PC-3 (cell line): ENCODE measurements at regions of chr3 and their contacts with region 1.

Region 1: GRCh38 chr3:30693470-30694120 is 87.2 kb downstream of the TGFBR2 start:
- DNase-seq: peak; percentile 82
- ATAC-seq: peak; percentile 49
- H3K4me3 ChIP-seq: no peak overlapping the region
- H3K27ac ChIP-seq: peak overlapping the region; percentile 0; the same call in 1 of the 2 replicates
- H3K4me1 ChIP-seq: peaks cover 35% of the 10 kb centered on the region
- H3K27me3 ChIP-seq: no peaks in the 10 kb centered on the region
- CTCF ChIP-seq: peak; percentile 94

Region 2: GRCh38 chr3:30012941-30013543 is 680.6 kb before region 1 on chr3:
- CTCF ChIA-PET with region 1: no interaction called
- POLR2A ChIA-PET with region 1: no interaction called
- intact Hi-C with region 1: loop called (anchors 10 kb)
- DNase-seq: peak; percentile 92
- ATAC-seq: peak; percentile 89
- H3K4me3 ChIP-seq: no peak overlapping the region
- H3K27ac ChIP-seq: no peak overlapping the region
- H3K4me1 ChIP-seq: peaks cover 8% of the 10 kb centered on the region
- H3K27me3 ChIP-seq: no peaks in the 10 kb centered on the region
- CTCF ChIP-seq: peak; percentile 94

Region 3: DNA sequence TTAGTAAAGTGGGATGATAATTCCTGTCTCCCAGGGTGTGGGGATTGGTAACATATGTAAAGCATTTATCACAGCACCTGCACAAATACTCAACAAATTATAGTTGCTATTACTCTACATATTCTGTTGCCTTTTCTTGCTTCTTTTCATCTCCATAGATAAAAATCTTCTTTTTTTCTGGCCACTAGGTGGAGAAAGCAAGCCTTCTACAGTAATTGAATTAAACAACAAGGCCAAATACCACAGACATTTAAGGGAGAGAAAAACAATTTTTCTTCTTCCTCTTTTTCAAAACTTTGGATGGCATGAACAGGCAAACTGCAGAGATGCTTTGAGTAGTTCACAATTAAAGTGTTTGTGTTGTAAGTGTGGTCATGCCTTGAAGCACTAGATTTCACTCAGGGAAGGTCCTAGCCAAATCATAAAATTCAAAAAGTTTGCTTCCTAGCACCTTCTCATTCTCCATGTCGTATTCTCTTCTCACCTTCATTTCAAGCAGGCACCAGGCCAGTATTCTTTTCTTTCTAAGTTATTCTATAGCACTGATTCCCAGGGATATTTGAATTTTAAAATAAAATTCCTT is 580.6 kb before region 1 on chr3:
- CTCF ChIA-PET with region 1: no interaction called
- POLR2A ChIA-PET with region 1: no interaction called
- intact Hi-C with region 1: loop called (anchors 1 kb)
- DNase-seq: peak; percentile 85
- ATAC-seq: peak; percentile 53
- H3K4me3 ChIP-seq: no peak overlapping the region
- H3K27ac ChIP-seq: no peak overlapping the region
- H3K4me1 ChIP-seq: peaks cover 23% of the 10 kb centered on the region
- H3K27me3 ChIP-seq: no peaks in the 10 kb centered on the region
- CTCF ChIP-seq: peak; percentile 88

Region 4: DNA sequence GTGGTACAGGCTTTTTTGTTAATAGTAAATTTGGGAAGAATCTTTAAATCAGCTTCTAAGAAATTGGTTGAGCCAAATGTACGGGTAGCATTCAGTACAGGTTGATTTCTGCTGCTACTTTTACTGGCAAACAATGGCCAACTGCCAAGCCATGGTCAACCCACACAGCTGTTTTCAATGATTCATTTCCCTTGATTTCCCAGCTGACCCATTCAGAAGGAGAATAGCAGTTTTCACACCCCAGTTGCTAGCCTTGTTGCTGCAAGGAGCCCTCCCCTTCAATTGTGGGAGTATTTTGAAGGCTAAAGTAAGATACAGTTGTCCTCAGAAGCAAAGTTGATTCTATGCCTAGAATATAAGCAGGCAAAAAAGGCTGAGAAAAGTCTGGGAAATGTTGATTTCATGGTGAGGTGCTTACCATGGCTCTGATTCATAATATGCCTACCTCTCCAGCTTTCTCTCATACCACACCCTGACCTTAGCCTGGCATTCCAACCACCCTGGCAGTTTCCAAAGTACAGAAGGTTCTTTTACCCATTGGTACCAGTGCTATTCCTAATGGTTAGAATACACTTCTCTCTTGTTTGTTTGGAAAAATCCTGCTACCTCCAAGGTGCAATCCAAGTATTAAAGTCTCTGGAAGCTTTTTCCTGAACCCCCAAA is 407.5 kb before region 1 on chr3:
- CTCF ChIA-PET with region 1: no interaction called
- POLR2A ChIA-PET with region 1: no interaction called
- intact Hi-C with region 1: loop called (anchors 10 kb)
- DNase-seq: peak; percentile 93
- ATAC-seq: peak; percentile 66
- H3K4me3 ChIP-seq: no peak overlapping the region
- H3K27ac ChIP-seq: peak overlapping the region; percentile 81
- H3K4me1 ChIP-seq: peaks cover 57% of the 10 kb centered on the region
- H3K27me3 ChIP-seq: no peaks in the 10 kb centered on the region
- CTCF ChIP-seq: no peak

Region 5: GRCh38 chr3:30518181-30518864 is 175.3 kb before region 1 on chr3:
- CTCF ChIA-PET with region 1: no interaction called
- POLR2A ChIA-PET with region 1: no interaction called
- intact Hi-C with region 1: loop called (anchors 2 kb)
- DNase-seq: peak; percentile 74
- ATAC-seq: peak; percentile 68
- H3K4me3 ChIP-seq: no peak overlapping the region
- H3K27ac ChIP-seq: peak overlapping the region; percentile 16; the same call in 1 of the 2 replicates
- H3K4me1 ChIP-seq: peaks cover 28% of the 10 kb centered on the region
- H3K27me3 ChIP-seq: no peaks in the 10 kb centered on the region
- CTCF ChIP-seq: no peak

Region 6: DNA sequence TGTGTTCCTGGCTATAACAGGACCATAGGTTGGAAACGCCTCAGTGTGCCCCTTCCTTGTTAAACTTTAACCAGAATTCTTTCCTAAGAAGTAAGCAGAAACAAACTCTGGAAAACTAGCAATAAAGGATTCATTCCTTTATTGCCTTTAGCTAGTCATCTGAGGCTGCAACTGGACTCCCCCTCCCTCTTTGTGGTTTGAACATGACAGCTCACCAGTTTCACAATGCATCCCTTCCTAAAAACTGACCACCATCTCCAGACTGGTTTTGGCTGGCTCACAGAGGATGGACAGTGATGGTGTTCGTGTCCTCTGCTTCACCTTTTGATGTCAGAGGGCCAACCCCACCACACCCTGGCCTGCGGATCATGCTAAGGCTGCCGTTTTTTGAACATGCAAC is 115.1 kb before region 1 on chr3:
- CTCF ChIA-PET with region 1: no interaction called
- POLR2A ChIA-PET with region 1: no interaction called
- intact Hi-C with region 1: loop called (anchors 1 kb)
- DNase-seq: peak; percentile 94
- ATAC-seq: peak; percentile 91
- H3K4me3 ChIP-seq: no peak overlapping the region
- H3K27ac ChIP-seq: peak overlapping the region; percentile 83
- H3K4me1 ChIP-seq: peaks cover 22% of the 10 kb centered on the region
- H3K27me3 ChIP-seq: no peaks in the 10 kb centered on the region
- CTCF ChIP-seq: no peak

Region 7: DNA sequence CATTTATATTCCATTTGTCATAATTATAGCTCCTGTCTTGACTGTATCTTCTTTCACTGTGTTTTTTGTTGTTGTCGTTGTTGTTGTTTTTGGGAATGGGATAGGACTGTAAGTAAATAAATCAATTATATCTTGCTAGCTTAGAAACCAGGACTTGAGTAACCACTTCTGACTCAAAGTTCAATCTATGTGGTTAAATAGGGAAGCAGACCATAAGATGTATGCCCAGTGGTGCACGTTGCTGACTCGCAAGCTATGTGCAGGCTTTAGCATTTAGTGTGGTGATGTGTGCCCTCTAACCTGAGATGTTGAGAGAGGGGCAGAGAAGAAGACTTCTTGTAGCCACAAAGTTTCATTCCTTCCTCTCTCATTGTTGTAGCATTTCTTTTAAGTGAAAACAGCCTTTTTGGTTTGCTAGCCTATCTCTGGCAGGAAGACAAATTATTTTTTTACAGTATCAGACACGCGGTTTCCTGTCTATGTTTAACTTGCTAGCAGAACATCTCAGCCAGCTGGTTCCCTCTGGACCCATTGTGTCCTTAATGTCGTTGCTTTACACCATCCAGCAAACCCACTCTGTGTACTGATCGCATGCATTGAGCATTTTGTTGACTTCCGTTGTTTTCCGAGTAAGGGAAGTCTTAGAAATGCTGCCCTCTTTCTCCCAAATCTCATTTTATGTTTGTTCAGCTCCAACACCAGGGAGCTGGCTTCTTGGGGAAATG is 35.1 kb before region 1 on chr3:
- CTCF ChIA-PET with region 1: interaction called, 5 read pairs
- POLR2A ChIA-PET with region 1: no interaction called
- intact Hi-C with region 1: loop called (anchors 1 kb)
- DNase-seq: peak; percentile 83
- ATAC-seq: peak; percentile 58
- H3K4me3 ChIP-seq: peak overlapping the region; percentile 23
- H3K27ac ChIP-seq: peak overlapping the region; percentile 87
- H3K4me1 ChIP-seq: peaks cover 65% of the 10 kb centered on the region
- H3K27me3 ChIP-seq: no peaks in the 10 kb centered on the region
- CTCF ChIP-seq: no peak

Region 8: DNA sequence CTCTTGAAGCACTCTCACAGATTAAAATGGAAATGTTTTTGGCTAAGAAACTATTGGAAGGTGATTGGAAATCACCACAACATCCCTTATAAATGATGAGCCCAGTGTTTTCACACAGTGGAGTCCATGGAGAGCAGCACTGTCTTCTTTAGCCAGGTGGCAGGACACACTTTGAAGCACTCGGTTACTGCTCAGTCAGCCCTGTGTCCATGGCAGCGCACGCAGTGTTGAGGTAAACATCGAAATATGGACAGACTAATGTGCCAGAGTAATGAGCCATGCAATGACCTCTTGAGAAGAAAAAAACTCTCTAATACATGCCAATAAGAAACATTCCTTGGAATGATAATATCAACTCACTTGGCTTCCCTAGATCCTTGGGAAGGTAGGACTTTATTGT is 20.6 kb before region 1 on chr3:
- CTCF ChIA-PET with region 1: no interaction called
- POLR2A ChIA-PET with region 1: no interaction called
- intact Hi-C with region 1: no loop called
- DNase-seq: no peak
- ATAC-seq: no peak
- H3K4me3 ChIP-seq: no peak overlapping the region
- H3K27ac ChIP-seq: no peak overlapping the region
- H3K4me1 ChIP-seq: peaks cover 18% of the 10 kb centered on the region
- H3K27me3 ChIP-seq: no peaks in the 10 kb centered on the region
- CTCF ChIP-seq: no peak